Panc1 (cell line): ENCODE measurements at regions of chr20 and their contacts with region 1.

Region 1: DNA sequence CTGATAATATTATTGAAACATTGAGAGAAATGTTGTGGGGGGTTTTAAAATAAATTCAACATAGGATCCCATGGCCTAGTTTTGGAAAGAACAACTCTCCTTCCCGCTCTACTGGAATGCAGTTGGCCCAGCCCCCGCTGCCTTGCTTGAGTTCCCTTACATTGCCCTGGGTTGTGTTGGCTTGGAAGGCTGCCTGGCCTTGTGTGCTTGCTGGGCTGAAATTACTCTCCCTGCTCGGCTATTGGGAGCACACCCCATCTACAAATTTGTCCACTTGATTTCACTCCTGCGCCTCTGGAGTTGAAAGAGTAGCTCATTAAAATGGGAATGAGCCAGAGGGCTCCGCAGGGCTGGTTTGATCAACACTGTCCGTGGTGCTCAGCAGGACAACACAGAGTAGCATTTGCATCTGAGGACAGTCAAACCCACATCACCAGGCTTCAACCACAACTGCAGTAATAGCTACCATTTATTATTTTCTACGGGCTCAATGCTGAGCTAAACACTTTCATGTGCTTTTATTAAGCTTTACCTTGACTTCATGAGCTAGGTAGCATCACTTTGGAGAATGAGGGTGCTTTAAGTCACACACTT is 35.2 kb downstream of the DOK5 start:
- DNase-seq: no peak
- ATAC-seq: no peak
- H3K4me3 ChIP-seq: no peak overlapping the region
- H3K27ac ChIP-seq: no peak overlapping the region
- H3K4me1 ChIP-seq: no peaks in the 10 kb centered on the region
- H3K27me3 ChIP-seq: no peaks in the 10 kb centered on the region
- CTCF ChIP-seq: no peak

Region 2: GRCh38 chr20:54534101-54534500 is 23.5 kb after region 1 on chr20:
- CTCF ChIA-PET with region 1: interaction called, 11 read pairs
- POLR2A ChIA-PET with region 1: no interaction called
- in situ Hi-C with region 1: no loop called
- intact Hi-C with region 1: no loop called
- DNase-seq: no peak
- ATAC-seq: no peak
- H3K4me3 ChIP-seq: no peak overlapping the region
- H3K27ac ChIP-seq: no peak overlapping the region
- H3K4me1 ChIP-seq: no peaks in the 10 kb centered on the region
- H3K27me3 ChIP-seq: no peaks in the 10 kb centered on the region; the same call in 1 of the 2 replicates
- CTCF ChIP-seq: no peak

Region 3: GRCh38 chr20:54633374-54634355 is 123.0 kb after region 1 on chr20:
- CTCF ChIA-PET with region 1: no interaction called
- POLR2A ChIA-PET with region 1: interaction called, 17 read pairs
- in situ Hi-C with region 1: no loop called
- intact Hi-C with region 1: no loop called
- DNase-seq: no peak
- ATAC-seq: no peak
- H3K4me3 ChIP-seq: no peak overlapping the region
- H3K27ac ChIP-seq: no peak overlapping the region
- H3K4me1 ChIP-seq: no peaks in the 10 kb centered on the region
- H3K27me3 ChIP-seq: peaks cover 5% of the 10 kb centered on the region; the same call in 1 of the 2 replicates
- CTCF ChIP-seq: no peak